Activated naive CD4-positive, alpha-beta T cell treated with anti-CD3 and anti-CD28 coated beads, Interleukin-2, amount 10 ng/mL, durations not matched to agents 7 days and 5 days (primary cell): ENCODE measurements at regions of chr4 and their contacts with region 1.

Region 1: GRCh38 chr4:82739316-82740179 is 59.0 kb downstream of the SCD5 start:
- DNase-seq: peak; percentile 86
- H3K4me3 Mint-ChIP-seq: no peak overlapping the region
- H3K27ac Mint-ChIP-seq: no peak overlapping the region
- H3K4me1 Mint-ChIP-seq: no peaks in the 10 kb centered on the region
- H3K27me3 Mint-ChIP-seq: peaks cover 16% of the 10 kb centered on the region

Region 2: DNA sequence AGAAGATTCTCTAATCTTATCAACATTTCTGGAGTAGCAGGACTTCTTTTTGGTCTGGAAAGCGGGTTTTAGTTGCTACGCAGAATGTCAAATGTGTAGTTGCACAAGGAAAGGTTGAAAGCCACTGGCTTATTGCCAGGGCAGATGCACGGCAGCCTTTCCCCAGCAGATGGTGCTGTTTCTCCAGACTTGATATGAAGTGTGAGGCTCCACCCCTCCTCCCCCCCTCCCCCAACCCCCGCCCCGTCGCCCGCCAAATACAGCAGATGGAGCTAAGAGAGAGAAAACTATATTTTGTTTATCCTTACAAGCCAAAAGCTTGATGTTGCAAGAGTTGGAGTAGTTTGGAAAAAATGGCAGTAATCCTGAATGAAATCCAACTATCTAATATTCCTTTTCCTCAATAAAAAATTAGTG is 277.1 kb before region 1 on chr4:
- CTCF ChIA-PET with region 1: interaction called, 18 read pairs
- DNase-seq: peak; percentile 91
- H3K4me3 Mint-ChIP-seq: no peak overlapping the region
- H3K27ac Mint-ChIP-seq: no peak overlapping the region
- H3K4me1 Mint-ChIP-seq: peaks cover 2% of the 10 kb centered on the region
- H3K27me3 Mint-ChIP-seq: no peaks in the 10 kb centered on the region

Region 3: DNA sequence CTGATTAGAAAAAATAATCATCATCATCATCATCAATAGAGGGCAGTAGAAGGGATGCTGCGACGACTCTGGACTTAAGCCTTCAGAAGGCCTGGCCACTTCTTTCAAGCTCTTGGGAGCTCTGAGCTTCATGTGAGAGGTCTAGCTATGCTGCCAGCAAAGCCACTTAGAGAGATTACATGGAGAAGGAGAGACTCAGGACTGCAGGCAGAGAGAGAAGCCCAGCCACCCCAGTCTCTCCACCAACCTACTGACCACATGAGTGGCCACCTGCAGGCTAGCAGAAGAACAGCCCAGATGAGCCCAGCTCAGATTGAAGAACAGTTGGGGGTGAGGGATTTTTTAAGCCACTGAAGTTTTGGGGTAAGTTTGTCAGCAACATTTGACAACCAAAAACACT is 160.6 kb before region 1 on chr4:
- CTCF ChIA-PET with region 1: no interaction called
- DNase-seq: no peak
- H3K4me3 Mint-ChIP-seq: no peak overlapping the region
- H3K27ac Mint-ChIP-seq: no peak overlapping the region
- H3K4me1 Mint-ChIP-seq: no peaks in the 10 kb centered on the region
- H3K27me3 Mint-ChIP-seq: peaks cover 14% of the 10 kb centered on the region

Region 4: GRCh38 chr4:82851885-82852750 is 112.6 kb after region 1 on chr4:
- CTCF ChIA-PET with region 1: no interaction called
- DNase-seq: no peak
- H3K4me3 Mint-ChIP-seq: no peak overlapping the region
- H3K27ac Mint-ChIP-seq: peak overlapping the region; percentile 25
- H3K4me1 Mint-ChIP-seq: no peaks in the 10 kb centered on the region
- H3K27me3 Mint-ChIP-seq: no peaks in the 10 kb centered on the region